ENCODE measurements at regions of chr6 and their contacts with region 1.

Region 1: DNA sequence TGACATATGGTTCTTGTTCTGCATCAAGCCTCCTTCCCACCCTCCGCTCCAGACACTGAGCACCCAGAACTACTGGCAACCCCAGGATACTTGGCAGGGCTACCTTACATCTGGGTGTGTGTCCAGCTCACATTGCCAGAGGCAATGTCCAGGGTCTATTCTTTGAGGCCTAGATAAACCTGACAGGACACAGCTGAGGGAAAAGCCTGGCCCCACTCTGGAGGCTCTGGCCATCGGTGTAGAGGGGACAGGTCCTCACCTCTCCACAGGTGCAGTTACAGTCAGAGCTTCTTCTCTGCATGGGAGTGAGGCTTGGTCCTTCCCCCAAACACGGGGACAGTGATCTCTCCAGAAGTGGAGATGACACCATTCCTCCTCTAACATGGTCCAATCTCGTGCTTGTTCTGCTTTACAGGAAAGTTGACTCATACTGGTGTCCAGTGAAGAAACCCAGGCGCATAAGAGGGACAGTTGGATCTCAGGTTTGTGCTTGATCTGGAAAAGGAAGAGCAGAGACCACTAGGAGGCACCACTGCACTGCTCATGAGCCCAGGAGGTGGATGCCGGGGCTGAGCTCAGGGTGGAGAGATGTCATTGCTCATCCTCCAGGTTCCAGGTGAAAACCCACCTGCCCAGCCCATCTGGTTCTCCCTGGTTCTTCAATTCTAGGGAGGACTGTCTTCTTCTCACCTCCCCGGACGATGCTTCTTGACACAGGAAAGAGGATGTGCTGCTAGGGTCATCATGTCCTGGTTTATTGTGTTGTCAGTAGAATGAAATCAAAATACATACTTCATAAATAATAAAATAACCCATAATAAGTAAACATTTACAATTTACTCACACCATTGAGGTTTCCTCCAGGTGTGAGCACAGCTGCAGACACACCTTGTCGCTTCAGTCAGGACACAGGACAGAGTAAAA is 14.7 kb downstream of the HLA-F start:
- DNase-seq: peak; percentile 85
- ATAC-seq: peak; percentile 95
- H3K4me3 Mint-ChIP-seq: no peak overlapping the region
- H3K27ac Mint-ChIP-seq: no peak overlapping the region
- H3K4me1 Mint-ChIP-seq: peaks cover 10% of the 10 kb centered on the region
- H3K27me3 Mint-ChIP-seq: no peaks in the 10 kb centered on the region

Region 2: DNA sequence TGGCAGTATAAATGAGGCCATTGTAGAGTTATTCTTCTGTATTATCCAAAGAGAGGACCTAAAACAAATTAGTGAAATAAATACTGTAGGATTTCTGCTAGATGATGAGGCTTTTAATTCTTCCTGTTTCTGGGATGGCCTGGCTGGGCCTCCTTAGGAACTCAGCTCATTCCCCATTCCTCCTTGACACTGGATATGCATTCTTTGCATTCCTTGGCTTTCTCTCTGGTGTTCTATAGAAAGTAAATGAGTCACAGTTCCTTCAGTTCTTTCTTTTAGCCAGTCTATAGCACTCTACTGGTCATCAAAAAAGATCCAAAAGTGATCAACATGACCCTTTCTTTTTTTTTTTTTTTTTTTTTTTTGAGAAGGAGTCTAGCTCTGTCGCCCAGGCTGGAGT is 290.3 kb before region 1 on chr6:
- CTCF ChIA-PET with region 1: no interaction called
- POLR2A ChIA-PET with region 1: no interaction called
- intact Hi-C with region 1: no loop called
- DNase-seq: no peak
- ATAC-seq: no peak
- H3K4me3 Mint-ChIP-seq: no peak overlapping the region
- H3K27ac Mint-ChIP-seq: no peak overlapping the region
- H3K4me1 Mint-ChIP-seq: no peaks in the 10 kb centered on the region
- H3K27me3 Mint-ChIP-seq: peaks cover 55% of the 10 kb centered on the region

Region 3: GRCh38 chr6:29705389-29706231 is 32.4 kb before region 1 on chr6:
- CTCF ChIA-PET with region 1: interaction called, 5 read pairs
- POLR2A ChIA-PET with region 1: no interaction called
- intact Hi-C with region 1: loop called in 1 of 2 experiments (anchors 1 kb)
- DNase-seq: no peak
- ATAC-seq: no peak
- H3K4me3 Mint-ChIP-seq: no peak overlapping the region
- H3K27ac Mint-ChIP-seq: no peak overlapping the region
- H3K4me1 Mint-ChIP-seq: peaks cover 47% of the 10 kb centered on the region
- H3K27me3 Mint-ChIP-seq: peaks cover 10% of the 10 kb centered on the region

Region 4: GRCh38 chr6:29723262-29723665 is 14.7 kb before region 1 on chr6 and contains the start of gene HLA-F:
- CTCF ChIA-PET with region 1: interaction called, 32 read pairs
- POLR2A ChIA-PET with region 1: no interaction called
- intact Hi-C with region 1: no loop called
- DNase-seq: peak; percentile 88
- ATAC-seq: peak; percentile 89
- H3K4me3 Mint-ChIP-seq: peak within 1 kb of the TSS; percentile 92
- H3K27ac Mint-ChIP-seq: peak within 1 kb of the TSS; percentile 94
- H3K4me1 Mint-ChIP-seq: peaks cover 49% of the 10 kb centered on the region
- H3K27me3 Mint-ChIP-seq: no peaks in the 10 kb centered on the region
- total RNA-seq, gene HLA-F: 216 to 229 TPM

Region 5: GRCh38 chr6:29752451-29753308 is 14.7 kb after region 1 on chr6:
- CTCF ChIA-PET with region 1: interaction called, 94 read pairs
- POLR2A ChIA-PET with region 1: no interaction called
- intact Hi-C with region 1: loop called (anchors 1 kb)
- DNase-seq: peak; percentile 93
- ATAC-seq: peak; percentile 80
- H3K4me3 Mint-ChIP-seq: peak overlapping the region; percentile 83
- H3K27ac Mint-ChIP-seq: peak overlapping the region; percentile 89
- H3K4me1 Mint-ChIP-seq: peaks cover 23% of the 10 kb centered on the region
- H3K27me3 Mint-ChIP-seq: no peaks in the 10 kb centered on the region

Region 6: GRCh38 chr6:29763491-29764289 is 25.7 kb after region 1 on chr6:
- CTCF ChIA-PET with region 1: interaction called, 15 read pairs
- POLR2A ChIA-PET with region 1: no interaction called
- intact Hi-C with region 1: no loop called
- DNase-seq: peak; percentile 65
- ATAC-seq: peak; percentile 94
- H3K4me3 Mint-ChIP-seq: no peak overlapping the region
- H3K27ac Mint-ChIP-seq: peak overlapping the region; percentile 1
- H3K4me1 Mint-ChIP-seq: peaks cover 11% of the 10 kb centered on the region
- H3K27me3 Mint-ChIP-seq: peaks cover 9% of the 10 kb centered on the region

Region 7: DNA sequence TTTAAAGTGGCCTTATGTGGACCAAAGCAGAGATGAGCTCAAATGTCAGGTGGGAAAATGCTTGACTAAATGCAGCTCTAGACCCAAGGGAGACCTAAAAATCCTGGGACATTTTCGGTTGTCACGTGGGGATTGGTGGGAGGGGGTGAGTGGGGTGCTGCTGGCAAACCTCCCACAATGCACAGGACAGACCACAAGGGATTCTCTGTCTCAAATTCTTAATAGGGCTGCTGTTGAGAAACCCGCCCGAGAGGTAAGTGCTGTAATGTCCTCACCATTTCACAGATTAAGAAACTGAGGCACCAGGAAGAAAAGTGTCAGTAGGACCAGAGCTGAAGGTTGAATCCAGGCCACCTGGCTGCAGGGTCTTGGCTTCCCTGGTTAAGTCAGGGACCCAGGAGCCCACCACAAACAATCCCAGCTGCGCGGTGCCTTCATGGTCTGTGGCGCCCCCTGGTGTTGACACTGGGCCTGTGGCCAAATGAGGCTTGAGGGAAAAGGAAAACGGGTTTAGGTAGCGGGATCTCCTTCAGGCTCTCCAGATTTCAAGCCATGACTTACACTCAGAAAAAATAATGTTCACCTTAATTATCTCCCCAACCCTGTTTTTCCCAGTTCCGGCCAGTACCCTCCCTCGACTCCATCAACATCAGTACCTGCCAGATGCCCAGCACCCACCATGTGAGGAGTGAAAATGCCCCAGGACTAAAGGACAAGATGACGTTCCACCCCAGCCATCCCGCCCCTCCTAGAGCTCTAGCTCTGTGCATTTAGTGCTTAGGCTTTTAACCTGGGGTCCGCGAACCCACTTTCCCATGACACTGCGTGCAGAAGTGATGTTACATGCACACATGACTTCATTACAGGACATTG is 96.8 kb after region 1 on chr6:
- CTCF ChIA-PET with region 1: interaction called, 27 read pairs
- POLR2A ChIA-PET with region 1: no interaction called
- intact Hi-C with region 1: loop called (anchors 1 kb)
- DNase-seq: peak; percentile 72
- ATAC-seq: no peak
- H3K4me3 Mint-ChIP-seq: no peak overlapping the region
- H3K27ac Mint-ChIP-seq: no peak overlapping the region
- H3K4me1 Mint-ChIP-seq: peaks cover 2% of the 10 kb centered on the region
- H3K27me3 Mint-ChIP-seq: peaks cover 44% of the 10 kb centered on the region

Measured in activated CD4-positive, alpha-beta T cell treated with anti-CD3 and anti-CD28 coated beads for 36 hours (primary cell).